ENCODE measurements at regions of chr1 and their contacts with region 1.

Region 1: DNA sequence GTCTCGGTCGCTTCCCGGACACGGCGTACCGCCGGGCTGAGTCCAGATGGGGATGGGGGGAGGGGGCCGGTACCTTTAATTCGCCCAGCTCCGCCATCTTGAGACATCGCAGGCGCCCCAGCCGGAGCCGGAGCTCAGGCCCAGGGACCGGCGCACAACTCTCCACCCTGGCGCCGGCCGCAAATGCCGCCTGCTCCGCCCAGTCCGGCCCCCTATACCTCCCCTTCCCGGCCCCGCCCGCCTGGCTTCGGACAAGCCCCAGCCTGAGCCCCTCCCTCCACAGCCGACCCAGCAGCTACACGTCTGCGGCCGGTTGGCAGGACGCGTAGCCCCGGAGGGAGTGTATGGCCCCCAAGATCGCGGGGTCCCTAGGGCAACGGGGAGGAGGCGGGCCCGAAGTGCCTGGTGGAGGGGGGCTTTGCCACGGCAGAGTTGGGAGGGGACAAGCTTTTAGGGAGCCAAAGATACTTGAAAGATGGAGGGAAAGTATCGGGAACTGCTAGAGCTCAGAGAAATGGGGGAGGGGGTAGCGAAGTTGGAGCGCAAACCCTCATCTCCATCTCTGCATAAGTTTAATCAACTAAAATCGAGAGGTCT is at the start of gene PIAS3:
- DNase-seq: peak; percentile 97
- H3K4me3 Mint-ChIP-seq: peak within 1 kb of the TSS; percentile 96
- H3K27ac Mint-ChIP-seq: peak within 1 kb of the TSS; percentile 96
- H3K4me1 Mint-ChIP-seq: peaks cover 14% of the 10 kb centered on the region
- H3K27me3 Mint-ChIP-seq: peaks cover 9% of the 10 kb centered on the region
- total RNA-seq, gene PIAS3: 19.1 and 20.2 TPM in 2 replicates

Region 2: DNA sequence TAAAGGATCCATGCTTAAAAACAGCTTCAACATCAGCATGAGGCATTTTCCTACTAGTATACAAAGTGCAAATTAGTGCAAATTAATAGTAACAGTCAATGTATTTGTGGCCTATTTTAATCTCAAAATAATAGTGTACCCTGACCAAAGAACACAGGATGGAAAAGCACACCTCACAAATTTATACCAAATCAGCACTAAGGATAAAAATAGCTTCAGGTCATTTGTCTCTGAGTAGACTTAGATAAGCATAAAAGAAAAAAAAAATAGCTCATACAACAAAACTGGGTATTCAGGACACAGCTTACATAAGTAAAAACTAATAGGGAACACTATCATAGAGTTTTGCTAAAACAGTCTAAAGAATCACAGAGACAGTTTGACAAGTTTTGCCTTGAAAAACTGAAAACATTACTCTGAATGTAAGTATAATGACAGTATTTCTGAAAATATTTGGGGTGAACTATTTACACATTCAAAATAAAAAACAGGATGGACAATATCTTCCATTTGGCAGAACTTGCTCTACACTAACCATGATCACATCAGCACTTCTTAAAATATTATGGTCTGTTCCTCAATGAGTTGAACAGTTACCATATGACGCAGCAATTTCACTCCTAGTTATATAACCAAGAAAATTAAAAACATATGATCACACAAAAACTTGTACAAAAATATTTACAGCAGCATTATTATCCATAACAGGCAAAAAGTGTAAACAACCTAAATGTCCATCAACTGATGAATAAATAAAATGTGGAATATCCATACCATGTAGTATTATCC is 81.4 kb before region 1 on chr1:
- intact Hi-C with region 1: no loop called
- DNase-seq: no peak
- H3K4me3 Mint-ChIP-seq: no peak overlapping the region
- H3K27ac Mint-ChIP-seq: no peak overlapping the region
- H3K4me1 Mint-ChIP-seq: peaks cover 14% of the 10 kb centered on the region
- H3K27me3 Mint-ChIP-seq: no peaks in the 10 kb centered on the region

Region 3: DNA sequence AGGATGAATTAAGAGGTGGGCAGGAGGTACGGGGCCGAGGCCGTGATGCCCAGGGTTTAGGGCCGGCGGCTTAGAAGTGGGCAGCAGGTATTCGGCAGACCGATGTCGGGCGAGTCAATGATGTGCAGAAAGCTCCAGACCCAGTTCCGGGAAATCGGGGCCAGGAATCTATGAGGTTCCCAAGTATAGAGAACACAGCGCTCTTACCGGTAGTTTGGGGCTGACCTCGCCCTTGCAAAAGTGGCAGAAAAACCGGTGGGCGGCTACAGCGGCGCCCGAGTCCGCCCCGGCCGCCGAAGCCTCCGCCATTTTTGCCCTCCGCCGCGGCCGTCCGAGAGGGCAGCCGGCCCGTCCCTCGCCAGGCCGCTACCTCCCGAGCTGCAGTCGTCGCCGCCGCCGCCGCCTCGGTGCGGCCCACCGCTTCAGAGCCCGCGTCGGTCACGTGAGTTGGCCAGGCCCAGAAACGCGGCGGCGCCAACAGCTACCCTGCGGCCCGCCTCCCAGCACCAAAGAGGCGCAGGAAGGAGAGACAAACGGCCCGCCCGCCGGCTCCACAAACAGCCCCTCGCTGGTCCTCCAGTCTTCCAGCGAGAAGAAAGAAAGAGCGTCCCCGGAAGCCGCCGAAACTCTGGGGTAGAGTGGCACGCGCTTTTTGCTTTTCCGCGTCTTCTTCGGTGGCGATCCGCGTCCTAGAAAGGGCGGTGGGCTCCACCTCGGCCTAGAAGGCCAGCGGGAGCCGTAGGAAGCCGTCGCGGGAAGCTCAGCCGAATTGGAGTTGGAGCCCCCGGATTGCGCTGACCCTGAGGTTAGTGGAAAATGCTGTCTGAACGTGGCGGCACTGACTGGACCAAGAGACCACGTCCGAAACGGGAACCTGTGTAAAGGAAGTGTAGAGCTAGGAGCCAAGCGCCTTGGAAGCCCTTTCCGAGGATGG is 35.2 kb before region 1 on chr1 and contains the starts of genes POLR3C and RNF115:
- intact Hi-C with region 1: loop called (anchors 2 kb)
- DNase-seq: peak; percentile 96
- H3K4me3 Mint-ChIP-seq: peak within 1 kb of the TSS; percentile 91
- H3K27ac Mint-ChIP-seq: peak within 1 kb of the TSS; percentile 93
- H3K4me1 Mint-ChIP-seq: peaks cover 40% of the 10 kb centered on the region
- H3K27me3 Mint-ChIP-seq: no peaks in the 10 kb centered on the region
- total RNA-seq, gene POLR3C: 35.0 and 39.0 TPM in 2 replicates
- total RNA-seq, gene RNF115: 14.1 and 15.5 TPM in 2 replicates

Region 4: DNA sequence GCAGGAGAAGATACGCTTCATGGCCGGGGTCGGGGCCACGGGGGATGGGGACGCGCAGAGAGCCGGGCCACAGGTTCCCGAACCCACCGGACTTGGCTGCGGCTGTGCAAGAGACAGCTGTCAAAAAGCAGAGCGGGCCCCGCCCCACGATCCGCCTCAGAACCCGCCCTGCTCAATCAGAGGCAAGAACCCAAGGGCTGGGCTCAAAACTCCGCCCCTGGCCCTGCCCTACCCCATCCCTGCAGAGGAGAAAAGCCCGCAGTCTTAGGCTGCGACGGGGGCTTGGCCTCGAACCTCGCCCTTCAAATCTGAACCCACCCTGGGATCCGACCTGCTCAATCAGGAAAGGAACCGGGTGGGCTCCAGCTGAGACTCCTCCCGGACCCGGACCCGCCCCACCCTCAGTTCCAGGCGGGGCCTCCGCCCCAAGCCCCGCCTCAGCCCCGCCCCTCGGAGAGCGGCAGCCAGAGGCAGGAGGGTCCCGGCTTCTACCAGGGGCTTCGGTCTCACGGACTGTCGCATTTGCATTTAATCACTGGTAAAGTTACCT is 26.8 kb after region 1 on chr1 and contains the start of gene ANKRD35:
- intact Hi-C with region 1: loop called (anchors 1 kb)
- DNase-seq: peak; percentile 97
- H3K4me3 Mint-ChIP-seq: peak within 1 kb of the TSS; percentile 87
- H3K27ac Mint-ChIP-seq: no peak within 1 kb of the TSS
- H3K4me1 Mint-ChIP-seq: peaks cover 18% of the 10 kb centered on the region
- H3K27me3 Mint-ChIP-seq: peaks cover 35% of the 10 kb centered on the region
- total RNA-seq, gene ANKRD35: 0.40 TPM in 2 replicates

Region 5: DNA sequence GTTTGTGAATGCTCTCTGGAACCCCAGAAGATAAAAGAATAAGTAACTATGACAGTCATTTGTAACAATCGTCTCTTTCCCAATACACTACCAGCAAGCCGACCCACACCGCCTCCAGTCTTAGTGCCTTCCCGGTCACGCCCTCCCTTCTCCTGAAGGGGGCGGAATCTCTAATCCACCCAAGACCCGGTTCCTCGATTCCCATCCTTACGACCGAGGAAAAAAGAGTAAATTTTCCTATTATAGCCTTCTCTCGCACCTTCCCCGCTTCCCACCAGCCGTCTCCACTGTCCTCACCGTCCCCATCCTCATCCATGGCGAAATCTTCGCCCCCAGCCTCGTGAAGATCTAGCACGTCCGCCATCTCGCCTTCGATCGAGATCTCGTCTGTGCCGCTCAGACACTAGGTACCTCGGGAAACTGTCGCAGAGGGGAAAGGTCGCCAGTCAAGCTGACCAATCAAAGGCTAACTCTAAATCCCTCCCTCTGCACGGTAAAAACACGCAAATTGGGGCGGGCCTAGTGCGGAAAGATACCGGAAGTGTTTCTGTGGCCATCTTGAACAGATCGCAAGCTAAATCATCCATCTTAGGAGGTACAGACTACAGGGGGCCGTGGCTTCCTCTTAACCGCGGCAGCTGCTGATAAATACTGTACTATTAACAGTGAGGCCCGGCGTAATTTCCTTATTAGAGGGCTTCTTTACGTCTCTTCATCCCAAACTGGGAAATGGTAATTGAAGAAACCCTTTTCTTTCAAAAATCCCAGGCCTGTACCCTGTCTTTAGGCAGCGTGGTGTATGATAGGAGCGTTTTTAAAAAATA is 68.3 kb after region 1 on chr1 and contains the start of gene RBM8A:
- intact Hi-C with region 1: loop called (anchors 1 kb)
- DNase-seq: peak; percentile 98
- H3K4me3 Mint-ChIP-seq: no peak within 1 kb of the TSS
- H3K27ac Mint-ChIP-seq: peak within 1 kb of the TSS; percentile 86
- H3K4me1 Mint-ChIP-seq: peaks cover 15% of the 10 kb centered on the region
- H3K27me3 Mint-ChIP-seq: no peaks in the 10 kb centered on the region
- total RNA-seq, gene RBM8A: 326 and 355 TPM in 2 replicates

Region 6: DNA sequence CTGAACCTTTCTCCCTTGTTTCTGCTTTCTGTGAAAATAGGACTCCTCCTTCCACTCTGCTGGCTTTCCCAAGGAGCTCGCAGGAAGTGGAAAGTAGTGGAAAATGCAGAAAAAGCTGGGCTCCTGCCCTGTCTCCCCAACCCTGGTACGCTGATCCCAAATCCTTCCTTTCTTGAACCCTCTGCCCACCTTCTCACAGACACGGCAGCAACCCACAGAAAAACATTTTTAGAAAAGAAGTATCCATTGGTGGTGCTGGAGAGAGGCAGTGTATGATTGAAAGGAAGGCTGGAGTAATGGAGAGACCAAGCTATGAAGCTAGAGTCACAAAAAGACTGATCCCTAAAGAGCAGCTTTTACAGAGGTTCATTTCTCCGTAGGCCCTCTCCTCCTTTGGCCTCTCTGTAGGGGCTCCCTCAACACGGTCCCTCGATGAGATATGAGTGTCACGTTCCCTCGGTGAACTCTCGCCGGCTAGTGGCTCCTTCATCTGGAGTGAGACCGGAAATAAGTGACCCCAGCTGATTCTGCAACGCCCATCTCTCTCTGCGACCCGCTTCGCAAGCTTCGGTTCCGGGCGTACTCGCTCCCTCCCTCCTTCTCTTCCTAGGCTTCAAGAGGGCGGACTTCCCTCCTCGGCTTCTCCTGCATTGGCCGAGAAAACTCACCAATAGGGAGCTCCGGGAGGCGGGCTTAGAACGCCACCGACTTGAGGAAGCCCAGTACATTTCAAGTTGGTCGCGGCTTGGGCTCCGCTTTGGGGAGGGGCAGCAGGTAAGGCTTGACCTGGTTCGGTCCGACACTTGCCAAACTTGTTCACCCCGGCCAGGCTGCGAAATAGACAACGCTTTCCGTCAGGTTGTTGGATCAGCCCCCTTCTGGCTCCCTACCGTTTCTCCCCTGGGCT is 105.3 kb after region 1 on chr1 and contains the starts of genes ANKRD34A and POLR3GL:
- intact Hi-C with region 1: loop called (anchors 1 kb)
- DNase-seq: peak; percentile 98
- H3K4me3 Mint-ChIP-seq: peak within 1 kb of the TSS; percentile 98
- H3K27ac Mint-ChIP-seq: peak within 1 kb of the TSS; percentile 93
- H3K4me1 Mint-ChIP-seq: peaks cover 37% of the 10 kb centered on the region
- H3K27me3 Mint-ChIP-seq: no peaks in the 10 kb centered on the region
- total RNA-seq, gene ANKRD34A: 4.8 and 5.2 TPM in 2 replicates
- total RNA-seq, gene POLR3GL: 12.1 and 12.6 TPM in 2 replicates